WTC11 (cell line): ENCODE measurements at regions of chr17 and their contacts with region 1.

Region 1: GRCh38 chr17:21457051-21458026 is 81.2 kb downstream of the KCNJ12 start:
- DNase-seq: peak; percentile 94
- ATAC-seq: peak; percentile 85
- H3K4me3 Mint-ChIP-seq: peak overlapping the region; percentile 53
- H3K27ac Mint-ChIP-seq: peak overlapping the region; percentile 56; the same call in 1 of the 2 replicates
- H3K4me1 Mint-ChIP-seq: peaks cover 25% of the 10 kb centered on the region
- H3K27me3 Mint-ChIP-seq: peaks cover 50% of the 10 kb centered on the region
- CTCF ChIP-seq: peak; percentile 91

Region 2: GRCh38 chr17:21275579-21276263 is 181.6 kb before region 1 on chr17:
- CTCF ChIA-PET with region 1: interaction called, 15 read pairs
- POLR2A ChIA-PET with region 1: no interaction called
- DNase-seq: peak; percentile 93
- ATAC-seq: peak; percentile 81
- H3K4me3 Mint-ChIP-seq: peak overlapping the region; percentile 76
- H3K27ac Mint-ChIP-seq: no peak overlapping the region
- H3K4me1 Mint-ChIP-seq: peaks cover 9% of the 10 kb centered on the region
- H3K27me3 Mint-ChIP-seq: peaks cover 48% of the 10 kb centered on the region
- CTCF ChIP-seq: no peak

Region 3: DNA sequence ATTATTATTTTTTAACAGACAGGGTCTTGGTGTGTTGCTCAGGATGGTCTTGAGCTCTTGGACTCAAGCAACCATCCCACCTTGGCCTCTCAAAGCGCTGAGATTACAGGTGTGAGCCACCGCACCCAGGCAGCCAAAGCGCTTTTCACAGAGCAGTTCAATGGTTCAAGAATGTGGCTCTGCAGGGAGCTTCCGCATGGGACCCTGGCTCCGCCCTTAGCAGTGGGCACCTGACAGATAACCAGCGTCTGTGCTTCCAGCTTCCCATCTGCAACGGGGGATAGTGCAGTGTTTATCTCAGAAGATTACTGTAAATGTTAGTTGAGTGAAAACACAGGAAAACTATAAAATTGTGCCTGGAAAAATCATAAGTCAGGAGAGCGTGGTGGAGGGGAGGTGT is 18.2 kb after region 1 on chr17:
- CTCF ChIA-PET with region 1: interaction called, 31 read pairs
- POLR2A ChIA-PET with region 1: no interaction called
- DNase-seq: no peak
- ATAC-seq: peak; percentile 41; the same call in 1 of the 2 replicates
- H3K4me3 Mint-ChIP-seq: no peak overlapping the region
- H3K27ac Mint-ChIP-seq: no peak overlapping the region
- H3K4me1 Mint-ChIP-seq: peaks cover 14% of the 10 kb centered on the region
- H3K27me3 Mint-ChIP-seq: peaks cover 6% of the 10 kb centered on the region; the same call in 1 of the 2 replicates
- CTCF ChIP-seq: no peak

Region 4: GRCh38 chr17:21495281-21495680 is 37.9 kb after region 1 on chr17:
- CTCF ChIA-PET with region 1: interaction called, 18 read pairs
- POLR2A ChIA-PET with region 1: no interaction called
- DNase-seq: no peak
- ATAC-seq: no peak
- H3K4me3 Mint-ChIP-seq: no peak overlapping the region
- H3K27ac Mint-ChIP-seq: no peak overlapping the region
- H3K4me1 Mint-ChIP-seq: peaks cover 34% of the 10 kb centered on the region
- H3K27me3 Mint-ChIP-seq: peaks cover 6% of the 10 kb centered on the region
- CTCF ChIP-seq: no peak